GM12878 (cell line): ENCODE measurements at regions of chr11 and their contacts with region 1.

Region 1: GRCh38 chr11:28529540-28530410 is 421.6 kb downstream of the METTL15 start:
- DNase-seq: no peak
- ATAC-seq: peak; percentile 70
- H3K4me3 ChIP-seq: no peak overlapping the region
- H3K27ac ChIP-seq: no peak overlapping the region
- H3K4me1 ChIP-seq: no peaks in the 10 kb centered on the region
- H3K27me3 ChIP-seq: no peaks in the 10 kb centered on the region
- CTCF ChIP-seq: peak; percentile 21 to 46 (median 28); a peak in 4 of 6 replicates
- EP300 ChIP-seq: no peak
- POLR2A ChIP-seq: no peak
- RAD21 ChIP-seq: peak; percentile 62

Region 2: DNA sequence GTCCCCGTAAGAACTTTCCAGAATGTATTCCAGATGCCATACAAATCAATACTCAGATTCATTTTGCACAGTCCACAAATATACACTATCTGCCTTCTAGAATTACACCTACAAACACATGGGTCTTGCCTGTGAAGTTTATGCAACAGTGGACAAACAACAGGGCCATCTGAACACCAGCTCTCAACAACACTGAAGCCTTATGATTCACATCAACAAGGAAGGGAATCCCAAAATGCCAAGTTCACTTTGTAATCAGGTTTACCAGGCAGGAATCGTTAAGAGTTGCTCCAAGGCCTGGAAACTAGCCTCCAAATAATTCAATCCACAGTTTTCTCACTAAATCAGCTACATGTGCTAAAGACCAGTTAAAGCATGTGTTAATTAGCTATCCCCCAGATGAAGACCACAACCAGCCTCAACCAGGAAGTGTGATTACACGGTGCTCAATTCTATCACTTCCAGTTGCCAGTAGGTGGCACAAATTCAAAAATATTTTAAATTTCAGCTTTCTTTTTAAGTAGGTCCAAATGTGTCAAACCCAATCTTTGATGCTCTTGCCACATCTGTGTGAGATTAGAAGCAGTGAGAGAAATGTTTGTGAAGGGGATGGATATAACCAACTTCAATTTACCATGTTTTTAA is 690.4 kb before region 1 on chr11:
- CTCF ChIA-PET with region 1: interaction called, 11 read pairs
- POLR2A ChIA-PET with region 1: no interaction called
- RAD21 ChIA-PET with region 1: no interaction called
- SMC1A ChIA-PET with region 1: interaction called, 4 read pairs
- in situ Hi-C with region 1: no loop called
- intact Hi-C with region 1: no loop called
- DNase-seq: no peak
- ATAC-seq: peak; percentile 58
- H3K4me3 ChIP-seq: no peak overlapping the region
- H3K27ac ChIP-seq: no peak overlapping the region
- H3K4me1 ChIP-seq: no peaks in the 10 kb centered on the region
- H3K27me3 ChIP-seq: no peaks in the 10 kb centered on the region
- CTCF ChIP-seq: peak in 2 of 3 experiments; percentile 19 to 34; a peak in 3 of 6 replicates
- EP300 ChIP-seq: no peak
- POLR2A ChIP-seq: no peak
- RAD21 ChIP-seq: no peak

Region 3: GRCh38 chr11:28107748-28108618 is 421.8 kb before region 1 on chr11 and contains the starts of genes KIF18A and METTL15:
- CTCF ChIA-PET with region 1: no interaction called
- POLR2A ChIA-PET with region 1: no interaction called
- RAD21 ChIA-PET with region 1: interaction called, 3 read pairs
- SMC1A ChIA-PET with region 1: interaction called, 10 read pairs
- in situ Hi-C with region 1: no loop called
- intact Hi-C with region 1: loop called (anchors 10 kb)
- DNase-seq: peak; percentile 96
- ATAC-seq: peak; percentile 91
- H3K4me3 ChIP-seq: peak within 1 kb of the TSS; percentile 86
- H3K27ac ChIP-seq: peak within 1 kb of the TSS; percentile 84
- H3K4me1 ChIP-seq: peaks cover 6% of the 10 kb centered on the region
- H3K27me3 ChIP-seq: no peaks in the 10 kb centered on the region
- CTCF ChIP-seq: no peak
- EP300 ChIP-seq: peak in 1 of 2 experiments; percentile 5; a peak in 1 of 4 replicates
- POLR2A ChIP-seq: peak; percentile 92
- RAD21 ChIP-seq: no peak
- polyA plus RNA-seq, gene KIF18A: 11.5 to 14.9 TPM
- polyA plus RNA-seq, gene METTL15: 10.5 to 15.1 TPM

Region 4: DNA sequence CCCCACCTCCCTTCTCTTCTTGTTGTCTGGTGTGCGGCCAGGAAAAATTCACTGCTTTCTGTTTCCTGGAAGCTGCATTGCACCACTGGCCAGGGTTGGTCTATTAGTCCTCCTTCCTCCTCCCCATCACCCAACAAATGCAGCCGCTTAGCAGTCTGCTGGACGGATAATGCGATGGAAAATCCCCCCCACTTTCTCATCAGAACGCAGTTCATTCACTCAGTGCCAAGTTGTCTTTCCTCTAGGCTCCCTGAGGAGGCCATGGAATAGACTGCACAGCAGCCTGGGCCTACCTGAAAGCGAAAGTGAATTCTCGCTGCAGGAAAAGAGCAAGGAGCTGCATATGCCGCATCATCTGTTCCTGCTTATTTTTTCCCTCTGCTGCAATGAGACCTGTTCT is 92.0 kb after region 1 on chr11:
- CTCF ChIA-PET with region 1: no interaction called
- POLR2A ChIA-PET with region 1: no interaction called
- RAD21 ChIA-PET with region 1: no interaction called
- SMC1A ChIA-PET with region 1: no interaction called
- in situ Hi-C with region 1: no loop called
- intact Hi-C with region 1: no loop called
- DNase-seq: no peak
- ATAC-seq: no peak
- H3K4me3 ChIP-seq: no peak overlapping the region
- H3K27ac ChIP-seq: no peak overlapping the region
- H3K4me1 ChIP-seq: no peaks in the 10 kb centered on the region
- H3K27me3 ChIP-seq: no peaks in the 10 kb centered on the region
- CTCF ChIP-seq: no peak
- EP300 ChIP-seq: no peak
- POLR2A ChIP-seq: no peak
- RAD21 ChIP-seq: no peak

Region 5: DNA sequence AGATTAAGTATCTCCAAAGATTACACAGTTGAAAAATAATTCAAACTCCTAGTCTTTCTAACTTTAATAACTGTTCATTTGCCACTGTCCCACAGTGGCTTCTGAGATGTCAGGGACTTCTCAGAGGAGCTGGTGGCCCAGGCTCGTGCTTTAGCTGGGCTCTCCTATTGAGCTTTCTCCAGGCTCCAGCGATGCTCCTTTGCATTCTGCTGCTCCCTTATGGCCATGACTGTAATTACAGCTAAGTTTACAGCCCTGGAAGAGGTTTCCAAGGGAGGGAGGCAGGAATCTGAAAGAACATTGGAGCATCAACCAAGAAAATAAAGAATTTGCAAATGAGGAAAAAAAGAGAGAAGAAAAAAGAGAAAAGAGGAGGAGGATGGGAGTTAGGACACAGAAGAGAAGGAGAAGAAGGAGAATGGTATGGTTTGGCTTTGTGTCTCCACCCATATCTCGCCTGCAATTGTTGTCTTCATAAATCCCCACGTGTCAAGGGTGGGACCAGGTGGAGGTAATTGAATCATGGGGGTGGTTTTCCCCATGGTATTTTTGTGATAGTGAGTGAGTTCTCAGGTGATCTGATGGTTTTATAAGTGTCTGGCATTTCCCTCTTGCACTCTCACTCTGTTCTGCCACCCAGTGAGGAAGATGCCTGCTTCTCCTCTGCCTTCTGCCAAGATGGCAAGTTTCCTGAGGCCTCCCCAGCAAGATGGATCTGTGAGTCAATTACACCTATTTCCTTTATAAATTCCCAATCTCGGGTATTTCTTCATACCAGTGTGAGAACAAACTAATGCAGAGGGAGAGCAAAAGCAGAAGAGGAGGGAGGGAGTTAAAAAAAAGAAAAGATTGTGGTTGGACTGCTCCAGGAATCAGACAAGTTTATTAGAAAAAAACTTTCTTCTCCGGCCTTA is 630.0 kb after region 1 on chr11:
- CTCF ChIA-PET with region 1: interaction called, 6 read pairs
- POLR2A ChIA-PET with region 1: no interaction called
- RAD21 ChIA-PET with region 1: interaction called, 12 read pairs
- SMC1A ChIA-PET with region 1: no interaction called
- in situ Hi-C with region 1: no loop called
- intact Hi-C with region 1: no loop called
- DNase-seq: no peak
- ATAC-seq: peak; percentile 98
- H3K4me3 ChIP-seq: no peak overlapping the region
- H3K27ac ChIP-seq: no peak overlapping the region
- H3K4me1 ChIP-seq: no peaks in the 10 kb centered on the region
- H3K27me3 ChIP-seq: no peaks in the 10 kb centered on the region
- CTCF ChIP-seq: peak; percentile 38 to 64 (median 52); a peak in 5 of 6 replicates
- EP300 ChIP-seq: no peak
- POLR2A ChIP-seq: no peak
- RAD21 ChIP-seq: peak; percentile 72